ENCODE measurements at regions of chr5 and their contacts with region 1.

Region 1: GRCh38 chr5:52943285-52943684 is 45.9 kb upstream of the ITGA2 start:
- DNase-seq: no peak
- H3K4me3 Mint-ChIP-seq: no peak overlapping the region
- H3K27ac Mint-ChIP-seq: no peak overlapping the region
- H3K4me1 Mint-ChIP-seq: peaks cover 10% of the 10 kb centered on the region
- H3K27me3 Mint-ChIP-seq: no peaks in the 10 kb centered on the region
- CTCF ChIP-seq: peak; percentile 10

Region 2: DNA sequence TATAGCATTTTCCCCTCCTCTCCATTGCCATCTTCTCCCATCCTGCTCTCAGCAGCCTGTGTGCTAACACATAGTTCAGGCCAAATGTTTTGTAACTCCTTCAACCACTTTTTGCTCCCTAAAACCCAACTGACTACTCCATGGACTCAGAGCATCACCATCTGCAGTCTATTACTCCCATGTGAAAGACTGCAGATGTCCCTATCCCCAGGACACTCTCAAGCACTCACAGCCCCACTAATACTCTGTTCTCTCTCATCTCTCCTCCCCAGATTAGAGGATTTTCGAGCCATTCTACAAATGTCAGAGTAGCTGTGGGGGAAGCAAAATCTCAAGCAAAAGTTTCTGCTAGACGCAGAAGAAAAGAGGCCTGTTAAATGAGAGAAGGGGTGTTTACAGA is 56.2 kb before region 1 on chr5:
- CTCF ChIA-PET with region 1: no interaction called
- POLR2A ChIA-PET with region 1: no interaction called
- intact Hi-C with region 1: no loop called
- DNase-seq: no peak
- H3K4me3 Mint-ChIP-seq: no peak overlapping the region
- H3K27ac Mint-ChIP-seq: no peak overlapping the region
- H3K4me1 Mint-ChIP-seq: no peaks in the 10 kb centered on the region
- H3K27me3 Mint-ChIP-seq: no peaks in the 10 kb centered on the region
- CTCF ChIP-seq: no peak

Region 3: DNA sequence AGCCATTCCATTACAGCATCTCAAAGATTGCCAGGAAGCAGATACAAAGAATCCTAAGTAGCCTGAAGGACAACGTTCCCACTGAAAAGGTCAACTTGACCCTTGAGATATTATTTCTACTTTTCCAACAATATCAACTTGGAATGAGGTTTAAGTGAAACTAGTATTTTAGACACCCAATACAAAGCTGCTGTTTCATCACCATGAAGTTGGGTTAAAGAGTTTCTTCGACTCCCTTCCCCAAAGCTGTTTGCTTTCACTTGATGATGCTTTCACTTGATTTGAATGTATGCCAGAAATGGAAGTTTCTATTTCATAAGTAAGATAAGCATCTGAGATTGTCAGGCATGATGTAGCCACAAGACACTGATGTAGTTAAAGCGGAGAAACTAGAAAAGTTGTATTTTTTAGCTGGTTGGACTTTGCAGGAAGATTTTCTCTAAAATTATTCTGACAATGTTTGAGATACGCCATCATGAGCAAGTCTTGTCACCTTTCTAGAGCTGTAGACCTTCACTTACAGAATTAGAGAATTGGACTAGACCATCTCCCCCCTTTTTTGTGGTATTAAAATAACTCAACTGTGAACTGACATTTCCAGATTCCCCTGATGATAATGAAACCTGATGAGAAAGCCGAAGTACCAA is 146.2 kb after region 1 on chr5:
- CTCF ChIA-PET with region 1: interaction called, 248 read pairs
- POLR2A ChIA-PET with region 1: interaction called, 19 read pairs
- intact Hi-C with region 1: no loop called
- DNase-seq: no peak
- H3K4me3 Mint-ChIP-seq: no peak overlapping the region
- H3K27ac Mint-ChIP-seq: no peak overlapping the region
- H3K4me1 Mint-ChIP-seq: peaks cover 7% of the 10 kb centered on the region
- H3K27me3 Mint-ChIP-seq: no peaks in the 10 kb centered on the region
- CTCF ChIP-seq: no peak

Region 4: DNA sequence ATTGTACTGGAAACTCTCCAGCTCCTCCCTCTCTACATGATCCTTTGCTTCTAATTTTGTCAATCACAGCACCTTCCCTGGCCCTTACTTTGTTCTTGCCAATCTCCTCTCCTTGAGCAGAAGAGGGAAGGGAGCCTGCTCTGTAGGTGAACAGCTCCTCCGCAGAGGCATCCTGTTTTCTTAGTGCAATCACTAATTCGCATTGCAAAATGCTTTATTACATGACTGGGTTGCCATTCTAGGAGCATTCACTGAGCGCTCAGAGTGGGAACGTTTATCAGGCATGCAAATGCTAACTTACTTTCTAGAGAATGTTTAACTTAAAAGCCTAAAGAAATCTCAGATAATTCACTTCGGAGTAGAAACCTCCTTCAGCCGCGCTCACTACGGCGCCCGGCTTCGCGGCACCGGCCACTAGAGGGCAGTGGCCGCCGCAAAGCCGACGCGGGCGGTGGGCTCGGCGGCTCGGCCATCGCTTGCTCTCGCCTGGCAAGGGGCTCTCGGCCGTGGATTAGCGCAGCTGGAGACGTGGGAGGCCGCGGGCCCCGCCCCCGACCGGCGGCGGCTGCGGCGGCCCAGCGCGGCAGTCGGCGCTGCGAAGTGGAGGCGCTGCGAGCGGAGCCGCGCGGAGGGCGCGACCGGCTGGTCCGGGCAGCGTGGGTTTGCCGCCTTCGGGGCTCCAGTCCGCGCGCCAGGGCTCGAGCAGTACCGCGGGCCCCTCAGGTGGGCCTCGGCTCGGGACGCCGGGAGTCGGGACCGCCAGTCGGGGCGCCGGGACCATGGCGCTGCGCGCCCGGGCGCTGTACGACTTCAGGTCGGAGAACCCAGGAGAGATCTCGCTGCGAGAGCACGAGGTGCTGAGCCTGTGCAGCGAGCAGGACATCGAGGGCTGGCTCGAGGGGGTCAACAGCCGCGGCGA is 1574.1 kb after region 1 on chr5 and contains the start of gene SNX18:
- CTCF ChIA-PET with region 1: no interaction called
- POLR2A ChIA-PET with region 1: no interaction called
- intact Hi-C with region 1: no loop called
- DNase-seq: peak; percentile 86
- H3K4me3 Mint-ChIP-seq: peak within 1 kb of the TSS; percentile 57
- H3K27ac Mint-ChIP-seq: no peak within 1 kb of the TSS
- H3K4me1 Mint-ChIP-seq: peaks cover 18% of the 10 kb centered on the region
- H3K27me3 Mint-ChIP-seq: no peaks in the 10 kb centered on the region
- CTCF ChIP-seq: peak; percentile 98
- total RNA-seq, gene SNX18: 8.7 and 10.0 TPM in 2 replicates